Activated CD4-positive, alpha-beta T cell treated with anti-CD3 and anti-CD28 coated beads for 36 hours (primary cell): ENCODE measurements at regions of chr5 and their contacts with region 1.

Region 1: DNA sequence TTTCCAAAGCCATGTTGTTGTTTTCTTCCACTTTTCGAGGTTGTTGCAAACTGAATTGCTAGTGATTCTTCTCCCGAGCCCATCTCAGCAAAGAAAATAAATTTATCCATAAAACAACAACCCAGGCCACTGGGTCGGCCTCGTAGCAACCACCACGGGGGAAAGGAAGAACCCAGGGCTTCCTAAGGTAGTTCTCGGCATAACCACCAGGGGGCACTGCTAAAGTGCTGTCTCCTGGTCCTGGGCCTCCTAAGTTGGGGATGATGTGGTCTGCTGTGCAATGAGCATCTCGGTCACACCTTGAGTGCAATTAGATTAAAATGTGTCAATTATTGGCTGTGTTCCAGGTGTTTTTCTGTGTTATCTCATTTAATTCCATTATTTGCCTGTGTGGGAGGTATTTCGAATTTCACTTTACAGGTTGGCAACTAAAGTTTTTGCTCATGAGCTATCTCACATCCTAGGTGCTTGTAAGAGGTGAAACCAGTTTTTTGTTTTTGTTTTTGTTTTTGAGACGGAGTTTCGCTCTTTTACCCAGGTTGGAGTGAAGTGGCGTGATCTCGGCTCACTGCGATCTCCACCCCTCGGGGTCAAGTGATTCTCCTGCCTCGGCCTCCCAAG is 102.8 kb upstream of the DAP start:
- DNase-seq: peak; percentile 78
- ATAC-seq: peak; percentile 74
- H3K4me3 Mint-ChIP-seq: no peak overlapping the region
- H3K27ac Mint-ChIP-seq: no peak overlapping the region
- H3K4me1 Mint-ChIP-seq: no peaks in the 10 kb centered on the region
- H3K27me3 Mint-ChIP-seq: peaks cover 2% of the 10 kb centered on the region

Region 2: GRCh38 chr5:10601246-10602030 is 262.4 kb before region 1 on chr5:
- CTCF ChIA-PET with region 1: no interaction called
- POLR2A ChIA-PET with region 1: no interaction called
- intact Hi-C with region 1: no loop called
- DNase-seq: peak; percentile 19
- ATAC-seq: peak; percentile 61
- H3K4me3 Mint-ChIP-seq: no peak overlapping the region
- H3K27ac Mint-ChIP-seq: no peak overlapping the region
- H3K4me1 Mint-ChIP-seq: peaks cover 27% of the 10 kb centered on the region
- H3K27me3 Mint-ChIP-seq: peaks cover 6% of the 10 kb centered on the region

Region 3: GRCh38 chr5:10695055-10695649 is 168.7 kb before region 1 on chr5:
- CTCF ChIA-PET with region 1: interaction called, 3 read pairs
- POLR2A ChIA-PET with region 1: no interaction called
- intact Hi-C with region 1: loop called in 1 of 2 experiments (anchors 5 kb)
- DNase-seq: peak; percentile 56
- ATAC-seq: peak; percentile 57
- H3K4me3 Mint-ChIP-seq: no peak overlapping the region
- H3K27ac Mint-ChIP-seq: no peak overlapping the region
- H3K4me1 Mint-ChIP-seq: peaks cover 27% of the 10 kb centered on the region
- H3K27me3 Mint-ChIP-seq: no peaks in the 10 kb centered on the region

Region 4: DNA sequence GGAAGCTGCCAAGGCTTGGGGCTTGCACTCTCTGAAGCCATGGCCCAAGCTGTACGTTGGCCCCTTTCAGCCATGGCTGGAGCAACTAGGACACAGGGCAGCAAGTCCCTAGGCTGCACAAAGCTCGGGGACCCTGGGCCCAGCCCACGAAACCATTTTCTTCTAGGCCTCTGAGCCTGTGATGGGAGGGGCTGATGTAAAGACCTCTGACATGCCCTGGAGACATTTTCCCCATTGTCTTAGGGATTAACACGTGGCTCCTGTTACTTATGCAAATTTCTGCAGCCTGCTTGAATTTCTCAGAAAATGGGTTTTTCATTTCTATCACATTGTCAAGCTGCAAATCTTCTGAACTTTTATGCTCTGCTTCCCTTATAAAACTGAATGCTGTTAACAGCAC is 19.9 kb before region 1 on chr5:
- CTCF ChIA-PET with region 1: no interaction called
- POLR2A ChIA-PET with region 1: no interaction called
- intact Hi-C with region 1: no loop called
- DNase-seq: no peak
- ATAC-seq: no peak
- H3K4me3 Mint-ChIP-seq: no peak overlapping the region
- H3K27ac Mint-ChIP-seq: no peak overlapping the region
- H3K4me1 Mint-ChIP-seq: no peaks in the 10 kb centered on the region
- H3K27me3 Mint-ChIP-seq: peaks cover 12% of the 10 kb centered on the region

Region 5: GRCh38 chr5:10934783-10935355 is 71.0 kb after region 1 on chr5:
- CTCF ChIA-PET with region 1: no interaction called
- POLR2A ChIA-PET with region 1: no interaction called
- intact Hi-C with region 1: no loop called
- DNase-seq: no peak
- ATAC-seq: no peak
- H3K4me3 Mint-ChIP-seq: no peak overlapping the region
- H3K27ac Mint-ChIP-seq: no peak overlapping the region
- H3K4me1 Mint-ChIP-seq: no peaks in the 10 kb centered on the region
- H3K27me3 Mint-ChIP-seq: peaks cover 5% of the 10 kb centered on the region

Region 6: GRCh38 chr5:11182441-11183268 is 318.8 kb after region 1 on chr5:
- CTCF ChIA-PET with region 1: no interaction called
- POLR2A ChIA-PET with region 1: no interaction called
- intact Hi-C with region 1: loop called in 1 of 2 experiments (anchors 10 kb)
- DNase-seq: no peak
- ATAC-seq: no peak
- H3K4me3 Mint-ChIP-seq: no peak overlapping the region
- H3K27ac Mint-ChIP-seq: no peak overlapping the region
- H3K4me1 Mint-ChIP-seq: peaks cover 12% of the 10 kb centered on the region
- H3K27me3 Mint-ChIP-seq: peaks cover 5% of the 10 kb centered on the region

Region 7: GRCh38 chr5:11494340-11494739 is 630.5 kb after region 1 on chr5:
- CTCF ChIA-PET with region 1: no interaction called
- POLR2A ChIA-PET with region 1: no interaction called
- intact Hi-C with region 1: loop called in 1 of 2 experiments (anchors 5 kb)
- DNase-seq: peak; percentile 5
- ATAC-seq: no peak
- H3K4me3 Mint-ChIP-seq: no peak overlapping the region
- H3K27ac Mint-ChIP-seq: no peak overlapping the region
- H3K4me1 Mint-ChIP-seq: no peaks in the 10 kb centered on the region
- H3K27me3 Mint-ChIP-seq: peaks cover 2% of the 10 kb centered on the region

Region 8: GRCh38 chr5:12023614-12024241 is 1159.9 kb after region 1 on chr5:
- CTCF ChIA-PET with region 1: no interaction called
- POLR2A ChIA-PET with region 1: no interaction called
- intact Hi-C with region 1: loop called in 1 of 2 experiments (anchors 2 kb)
- DNase-seq: no peak
- ATAC-seq: no peak
- H3K4me3 Mint-ChIP-seq: no peak overlapping the region
- H3K27ac Mint-ChIP-seq: no peak overlapping the region
- H3K4me1 Mint-ChIP-seq: no peaks in the 10 kb centered on the region
- H3K27me3 Mint-ChIP-seq: no peaks in the 10 kb centered on the region